ENCODE measurements at regions of chr16 and their contacts with region 1.

Region 1: DNA sequence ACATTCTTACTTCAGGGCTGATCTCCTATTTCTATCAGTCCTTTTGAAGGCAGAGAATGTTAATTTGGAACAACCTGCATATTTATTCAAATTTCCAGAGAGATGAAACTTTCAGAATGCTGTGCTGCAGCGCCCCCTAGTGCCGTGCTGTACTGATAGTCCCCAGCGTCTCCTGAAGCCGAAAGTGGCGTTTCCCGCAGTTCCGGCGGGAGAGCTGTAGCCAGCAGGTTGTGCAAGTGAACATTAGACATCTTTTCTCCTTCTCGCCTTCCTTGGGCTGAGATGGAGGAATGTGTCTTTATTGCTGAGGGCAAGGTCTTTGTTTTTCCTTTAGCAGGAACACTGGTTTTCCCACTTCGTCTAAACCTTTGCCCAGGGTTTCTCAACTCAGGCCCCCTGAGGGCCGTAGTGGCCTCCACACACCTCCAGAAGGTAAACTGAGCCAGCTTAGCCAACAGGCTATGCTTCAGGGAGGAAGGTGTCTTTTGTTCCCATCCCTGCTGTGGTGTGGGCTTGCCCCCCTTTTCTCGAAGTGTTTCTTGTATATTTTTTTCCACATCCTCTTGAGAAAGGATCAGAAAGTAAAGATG is 26.4 kb downstream of the USP10 start:
- DNase-seq: peak; percentile 54
- CTCF ChIP-seq: peak; percentile 86

Region 2: GRCh38 chr16:84617791-84618580 is 108.2 kb before region 1 on chr16 and contains the start of gene COTL1:
- CTCF ChIA-PET with region 1: interaction called, 48 read pairs
- POLR2A ChIA-PET with region 1: no interaction called
- DNase-seq: peak; percentile 96
- CTCF ChIP-seq: no peak

Region 3: GRCh38 chr16:84663433-84664101 is 62.6 kb before region 1 on chr16:
- CTCF ChIA-PET with region 1: interaction called, 23 read pairs
- POLR2A ChIA-PET with region 1: no interaction called
- DNase-seq: peak; percentile 63
- CTCF ChIP-seq: peak; percentile 1

Region 4: GRCh38 chr16:84687715-84688114 is 38.5 kb before region 1 on chr16:
- CTCF ChIA-PET with region 1: interaction called, 17 read pairs
- POLR2A ChIA-PET with region 1: no interaction called
- DNase-seq: peak; percentile 52
- CTCF ChIP-seq: no peak

Region 5: DNA sequence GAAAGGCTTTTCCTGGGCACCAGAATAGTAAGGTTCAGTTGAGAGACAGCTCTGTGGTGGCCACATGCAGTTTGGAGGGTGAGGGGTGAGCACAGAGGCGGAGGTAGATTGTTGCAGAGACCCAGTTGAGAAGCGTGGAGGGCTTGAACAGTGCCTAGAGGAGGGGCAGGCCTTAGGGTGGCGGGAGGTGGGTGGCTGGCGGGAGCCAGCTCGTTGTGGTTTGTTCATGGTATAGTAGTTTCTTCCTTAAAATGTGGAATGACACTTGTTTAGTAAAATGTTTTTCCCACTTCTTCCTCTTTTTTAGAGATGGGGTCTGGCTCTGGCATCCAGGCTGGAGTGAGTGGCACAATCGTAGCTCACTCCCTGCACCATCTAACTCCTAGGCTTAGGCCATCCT is 12.1 kb before region 1 on chr16:
- CTCF ChIA-PET with region 1: interaction called, 202 read pairs
- POLR2A ChIA-PET with region 1: no interaction called
- DNase-seq: no peak
- CTCF ChIP-seq: no peak

Region 6: GRCh38 chr16:84754353-84754856 is 28.2 kb after region 1 on chr16:
- CTCF ChIA-PET with region 1: interaction called, 33 read pairs
- POLR2A ChIA-PET with region 1: interaction called, 3 read pairs
- DNase-seq: peak; percentile 74
- CTCF ChIP-seq: peak; percentile 63

Measured in GM10248 (cell line).